ENCODE measurements at regions of chr1 and their contacts with region 1.

Region 1: DNA sequence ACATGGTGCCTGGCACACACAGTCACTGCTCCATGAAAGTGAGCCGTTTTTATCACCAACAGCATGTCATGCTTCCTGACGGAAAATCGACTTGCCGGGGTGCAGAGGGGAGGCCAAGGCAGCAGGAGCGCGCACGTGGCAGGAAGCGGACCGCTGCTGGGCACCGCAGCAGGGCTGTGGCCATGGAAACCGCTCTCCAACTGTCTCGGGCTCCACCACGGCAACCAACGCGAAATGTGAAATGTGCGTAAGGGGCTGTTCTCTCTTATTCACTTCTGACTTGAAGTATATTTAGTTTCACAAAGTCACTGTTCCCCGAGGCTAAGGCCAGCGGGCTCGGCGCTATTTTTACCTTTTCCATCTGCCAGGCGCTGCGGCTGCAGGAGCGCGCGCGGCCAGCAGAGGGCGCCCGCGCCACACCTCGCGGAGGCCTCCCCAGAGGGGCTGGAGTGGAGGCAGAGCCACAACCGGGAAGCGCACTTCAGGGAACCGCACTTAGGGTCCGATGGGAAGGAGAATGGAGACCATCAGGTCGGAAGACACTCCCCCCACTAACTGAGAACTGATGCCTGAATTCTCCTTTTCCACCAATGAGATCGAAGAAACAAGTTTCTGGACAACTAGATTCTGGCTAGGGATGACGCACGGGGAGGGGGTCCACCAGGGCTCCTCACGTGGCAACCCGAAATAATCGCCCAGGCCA is 19.7 kb downstream of the RCC2 start:
- DNase-seq: peak; percentile 46
- H3K4me3 ChIP-seq: no peak overlapping the region
- H3K27ac ChIP-seq: no peak overlapping the region
- H3K4me1 ChIP-seq: no peaks in the 10 kb centered on the region
- H3K27me3 ChIP-seq: no peaks in the 10 kb centered on the region
- CTCF ChIP-seq: peak; percentile 96 to 99 (median 97)
- POLR2A ChIP-seq: no peak

Region 2: DNA sequence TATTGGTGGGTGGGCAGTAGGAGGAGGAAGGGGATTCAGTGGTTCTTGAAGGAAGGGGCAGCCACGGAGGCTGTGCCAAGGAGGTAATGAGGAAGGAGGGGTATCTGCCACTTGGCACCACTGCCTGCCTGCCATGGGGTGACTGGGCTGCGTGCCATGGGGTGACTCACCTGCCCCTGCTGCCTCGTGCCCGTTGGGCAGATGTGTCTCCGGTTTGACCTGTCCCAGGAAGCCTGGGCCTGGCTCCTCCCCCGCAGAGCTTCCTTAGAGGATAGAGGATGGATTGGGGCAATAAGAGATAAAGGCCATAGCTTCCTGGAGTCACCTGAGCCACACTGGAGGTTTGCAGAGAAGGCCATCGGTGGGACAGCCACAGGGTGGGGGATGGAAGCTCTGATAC is 169.2 kb before region 1 on chr1:
- intact Hi-C with region 1: no loop called
- DNase-seq: peak; percentile 30
- H3K4me3 ChIP-seq: no peak overlapping the region
- H3K27ac ChIP-seq: no peak overlapping the region
- H3K4me1 ChIP-seq: no peaks in the 10 kb centered on the region
- H3K27me3 ChIP-seq: no peaks in the 10 kb centered on the region
- CTCF ChIP-seq: no peak
- POLR2A ChIP-seq: no peak

Region 3: DNA sequence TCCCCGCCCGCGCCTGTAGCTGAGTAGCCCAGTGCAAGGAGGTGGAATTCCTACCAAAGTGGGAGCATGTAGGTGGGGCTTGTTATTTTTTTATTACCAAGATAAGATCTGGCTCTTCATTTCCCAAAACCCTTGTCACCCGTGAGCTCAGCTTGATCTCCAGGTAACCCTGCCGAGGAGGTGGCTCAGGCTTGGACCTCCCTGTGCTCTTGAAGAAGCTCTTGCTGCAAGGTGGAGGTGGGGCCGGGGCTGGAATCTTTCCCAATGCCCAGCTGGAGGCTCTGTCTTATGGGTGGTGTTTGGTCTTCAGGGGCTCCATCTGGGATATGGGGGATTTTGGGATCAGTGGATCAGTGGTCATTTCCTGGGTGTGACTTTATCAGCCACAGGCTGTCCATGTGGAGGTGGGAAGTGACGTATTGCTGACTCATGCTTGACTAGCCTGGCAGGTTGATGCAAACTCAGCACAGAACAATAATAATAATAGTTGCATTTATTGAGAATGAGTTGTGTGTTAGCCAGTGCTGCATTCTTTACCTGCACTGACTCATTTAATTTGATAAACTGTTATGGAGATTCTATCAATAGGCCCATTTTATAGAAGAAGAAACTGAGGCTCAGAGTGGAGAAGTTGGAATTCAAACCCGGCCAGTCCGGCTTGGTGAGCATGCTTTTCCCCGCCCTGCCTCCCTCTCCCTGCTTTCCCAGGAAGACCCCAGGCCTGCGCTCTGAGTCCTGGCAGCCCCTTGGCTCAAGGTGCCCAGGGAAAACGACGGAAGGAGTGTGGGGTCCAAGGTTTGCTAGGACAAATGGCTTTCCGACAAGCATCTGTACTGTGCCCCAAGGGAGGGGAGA is 71.4 kb before region 1 on chr1:
- intact Hi-C with region 1: no loop called
- DNase-seq: no peak
- H3K4me3 ChIP-seq: no peak overlapping the region
- H3K27ac ChIP-seq: no peak overlapping the region
- H3K4me1 ChIP-seq: no peaks in the 10 kb centered on the region
- H3K27me3 ChIP-seq: no peaks in the 10 kb centered on the region
- CTCF ChIP-seq: no peak
- POLR2A ChIP-seq: no peak

Region 4: GRCh38 chr1:17439250-17440073 is 19.7 kb after region 1 on chr1 and contains the start of gene RCC2:
- intact Hi-C with region 1: loop called (anchors 2 kb)
- DNase-seq: peak; percentile 37
- H3K4me3 ChIP-seq: peak within 1 kb of the TSS; percentile 63 to 68
- H3K27ac ChIP-seq: peak within 1 kb of the TSS; percentile 75 to 81
- H3K4me1 ChIP-seq: no peaks in the 10 kb centered on the region
- H3K27me3 ChIP-seq: no peaks in the 10 kb centered on the region
- CTCF ChIP-seq: peak in 1 of 4 experiments; percentile 26
- POLR2A ChIP-seq: no peak
- total RNA-seq, gene RCC2: 42.6 to 65.4 TPM

Region 5: GRCh38 chr1:17485280-17485679 is 65.5 kb after region 1 on chr1:
- intact Hi-C with region 1: loop called (anchors 10 kb)
- DNase-seq: no peak
- H3K4me3 ChIP-seq: no peak overlapping the region
- H3K27ac ChIP-seq: no peak overlapping the region
- H3K4me1 ChIP-seq: no peaks in the 10 kb centered on the region
- H3K27me3 ChIP-seq: no peaks in the 10 kb centered on the region
- CTCF ChIP-seq: peak in 3 of 4 experiments; percentile 32 to 54 (median 34)
- POLR2A ChIP-seq: no peak

Region 6: GRCh38 chr1:17617787-17618557 is 198.2 kb after region 1 on chr1:
- intact Hi-C with region 1: loop called (anchors 10 kb)
- DNase-seq: no peak
- H3K4me3 ChIP-seq: no peak overlapping the region
- H3K27ac ChIP-seq: peak overlapping the region; percentile 46 to 67
- H3K4me1 ChIP-seq: no peaks in the 10 kb centered on the region
- H3K27me3 ChIP-seq: no peaks in the 10 kb centered on the region
- CTCF ChIP-seq: no peak
- POLR2A ChIP-seq: no peak